ENCODE measurements at regions of chr1 and their contacts with region 1.

Region 1: DNA sequence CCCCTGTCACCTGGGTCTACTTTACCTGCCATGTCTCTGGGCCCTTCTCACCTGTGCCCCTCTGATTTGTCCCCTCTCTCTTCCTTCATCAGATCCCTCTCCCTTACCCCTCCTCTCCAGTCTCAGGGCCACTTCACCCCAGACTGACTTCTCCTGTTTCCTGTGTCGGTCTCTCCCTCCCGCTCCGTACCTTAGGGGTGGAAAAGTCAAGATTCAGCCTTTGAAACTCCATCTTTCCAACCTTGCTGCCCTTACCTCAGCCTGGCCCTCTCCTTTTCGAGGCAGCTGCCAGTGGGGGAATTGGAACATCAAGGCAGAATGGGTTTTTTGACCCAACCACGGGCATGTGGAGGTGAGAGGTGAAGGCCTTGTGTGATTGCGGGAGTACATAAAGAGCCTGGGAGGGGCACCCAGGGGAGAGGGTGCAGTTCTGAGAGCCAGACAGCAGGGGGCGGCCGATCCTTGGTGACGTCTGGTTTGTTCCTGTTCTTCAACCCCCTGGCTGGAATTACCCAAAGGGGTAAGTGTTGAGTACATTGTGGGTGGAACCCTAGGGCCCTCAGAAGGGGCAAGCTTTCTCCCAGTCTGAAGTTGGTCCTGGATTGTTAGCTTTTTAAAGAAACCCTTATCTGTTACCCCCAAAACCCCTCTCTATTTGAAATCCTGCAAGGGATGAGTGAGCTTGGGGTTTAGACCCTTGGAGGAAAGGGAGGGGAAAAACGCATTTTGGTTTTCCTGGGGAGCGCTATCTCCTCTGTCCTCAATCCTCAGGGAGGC is 12.3 kb upstream of the DMBX1 start:
- DNase-seq: peak; percentile 64
- H3K4me3 Mint-ChIP-seq: no peak overlapping the region
- H3K27ac Mint-ChIP-seq: no peak overlapping the region
- H3K4me1 Mint-ChIP-seq: no peaks in the 10 kb centered on the region
- H3K27me3 Mint-ChIP-seq: peaks cover 51% of the 10 kb centered on the region

Region 2: GRCh38 chr1:46539972-46540371 is 62.6 kb after region 1 on chr1:
- intact Hi-C with region 1: no loop called
- DNase-seq: no peak
- H3K4me3 Mint-ChIP-seq: no peak overlapping the region
- H3K27ac Mint-ChIP-seq: no peak overlapping the region
- H3K4me1 Mint-ChIP-seq: peaks cover 2% of the 10 kb centered on the region
- H3K27me3 Mint-ChIP-seq: peaks cover 54% of the 10 kb centered on the region

Region 3: DNA sequence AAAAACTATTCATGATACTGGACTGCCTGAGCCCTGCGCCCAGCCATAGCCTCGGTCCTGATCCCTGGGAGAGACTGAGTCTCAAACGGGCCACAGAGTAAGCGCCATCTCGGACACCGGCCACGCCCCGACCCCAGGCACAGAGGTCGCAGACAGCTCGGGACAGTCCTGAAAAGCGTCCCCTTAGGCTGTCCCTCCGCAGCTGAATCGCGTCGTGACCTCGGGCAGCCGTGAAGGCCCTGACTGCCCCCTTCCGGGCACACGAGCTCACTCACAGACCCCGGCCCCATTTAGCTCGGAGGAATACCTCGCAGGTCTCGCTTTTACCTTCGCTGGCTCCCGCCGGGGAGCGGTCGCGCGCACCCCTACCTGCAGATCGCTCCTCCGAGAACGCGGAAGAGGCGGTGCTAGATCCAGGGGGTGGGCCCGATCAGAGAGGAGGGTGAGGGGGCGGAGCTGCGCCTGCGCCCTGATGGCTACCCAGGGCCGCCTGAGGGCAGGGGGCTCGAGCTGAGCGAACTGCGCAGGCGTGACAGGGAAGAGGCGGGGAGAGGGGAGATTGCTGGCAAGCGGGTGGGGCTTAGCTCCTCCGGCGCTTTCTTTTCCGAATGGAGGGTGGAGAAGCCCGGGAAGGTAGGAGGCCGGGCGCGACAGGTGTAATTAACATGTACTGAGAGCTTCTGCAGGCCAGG is 126.7 kb after region 1 on chr1 and contains the start of gene MKNK1:
- intact Hi-C with region 1: no loop called
- DNase-seq: peak; percentile 97
- H3K4me3 Mint-ChIP-seq: peak within 1 kb of the TSS; percentile 87
- H3K27ac Mint-ChIP-seq: peak within 1 kb of the TSS; percentile 75
- H3K4me1 Mint-ChIP-seq: peaks cover 54% of the 10 kb centered on the region
- H3K27me3 Mint-ChIP-seq: no peaks in the 10 kb centered on the region
- total RNA-seq, gene MKNK1: 45.2 and 48.1 TPM in 2 replicates

Region 4: DNA sequence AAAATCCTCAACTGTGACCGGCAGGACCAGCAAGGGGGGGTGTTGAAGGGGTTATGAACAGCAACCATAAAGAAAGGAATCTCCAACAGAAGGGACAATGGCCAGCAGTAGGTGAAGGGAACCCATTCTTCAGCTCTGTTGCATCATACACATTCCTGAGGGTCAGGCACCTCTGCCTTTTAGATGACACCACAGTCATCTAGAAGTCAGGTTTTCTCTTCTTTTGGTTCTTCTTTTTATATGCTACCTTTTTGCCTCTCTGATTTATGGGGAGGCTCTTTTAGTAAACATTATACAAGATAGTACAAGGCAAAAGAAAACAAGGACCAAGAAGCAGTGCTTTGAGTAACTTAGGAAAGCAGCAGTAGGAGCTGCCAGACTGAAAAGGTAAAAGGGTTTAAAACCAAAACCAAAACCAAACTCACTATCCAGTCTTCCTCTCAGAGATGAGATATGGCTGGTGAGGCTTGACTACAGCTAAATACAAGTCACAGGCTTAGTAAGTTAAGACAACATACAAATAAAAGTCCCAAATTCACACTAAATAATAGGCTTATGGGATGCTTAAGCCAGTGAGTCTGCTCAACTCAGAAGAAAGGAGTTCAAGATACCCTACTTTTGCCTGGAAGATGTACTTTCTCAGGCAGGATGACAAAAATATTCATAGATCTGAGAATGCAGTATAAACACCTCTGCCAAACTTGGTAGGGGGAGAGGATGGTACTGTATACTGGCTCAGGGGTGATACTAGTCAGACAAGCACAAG is 198.4 kb after region 1 on chr1:
- intact Hi-C with region 1: no loop called
- DNase-seq: no peak
- H3K4me3 Mint-ChIP-seq: peak overlapping the region; percentile 58
- H3K27ac Mint-ChIP-seq: peak overlapping the region; percentile 90
- H3K4me1 Mint-ChIP-seq: peaks cover 34% of the 10 kb centered on the region
- H3K27me3 Mint-ChIP-seq: no peaks in the 10 kb centered on the region

Region 5: DNA sequence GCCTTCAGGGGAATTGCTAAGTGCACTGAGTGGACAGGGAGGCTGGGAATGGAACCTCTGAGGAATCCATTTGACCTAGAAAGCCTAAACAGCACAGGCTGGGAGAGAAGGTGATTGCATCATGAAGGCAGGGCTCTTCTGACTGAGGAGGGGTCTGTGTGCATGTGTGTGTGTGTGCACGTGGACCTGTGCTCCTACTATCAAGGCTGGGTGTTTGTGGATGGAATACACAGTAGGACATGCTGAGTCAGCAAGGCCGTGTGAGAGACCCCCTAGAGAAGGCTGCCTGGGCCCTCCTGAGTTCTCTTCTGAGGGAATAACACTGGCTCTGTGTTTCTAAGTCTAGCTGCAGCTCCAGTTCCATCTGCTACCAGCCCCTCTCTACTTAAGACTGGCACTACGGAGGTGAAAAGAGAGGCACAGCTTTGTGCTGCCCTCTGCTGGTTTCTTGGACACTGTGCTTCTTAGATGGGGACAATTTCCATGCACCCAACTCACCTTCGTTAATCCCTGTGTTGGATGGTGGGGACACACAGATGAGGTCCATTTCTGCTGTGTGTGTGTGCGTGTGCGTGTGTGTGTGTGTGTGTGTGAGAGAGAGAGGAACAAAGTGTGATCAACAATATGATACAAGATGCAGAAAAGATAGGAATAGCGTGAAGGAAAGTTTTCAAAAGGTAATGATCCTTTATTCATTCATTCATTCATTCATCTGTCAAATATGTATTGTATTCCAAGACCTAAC is 247.8 kb after region 1 on chr1:
- intact Hi-C with region 1: loop called (anchors 1 kb)
- DNase-seq: peak; percentile 60
- H3K4me3 Mint-ChIP-seq: no peak overlapping the region
- H3K27ac Mint-ChIP-seq: no peak overlapping the region
- H3K4me1 Mint-ChIP-seq: peaks cover 2% of the 10 kb centered on the region
- H3K27me3 Mint-ChIP-seq: peaks cover 23% of the 10 kb centered on the region

Measured in activated T-helper 2 cell treated with anti-CD3 and anti-CD28 coated beads, Interferon-gamma antibody, Interleukin-2, Interleukin-4, amounts not matched to agents 10 μg/mL and 5 μg/mL and 100 μg/mL, durations not matched to agents 14 hours and 24 hours and 36 hours (primary cell).